Activated CD4-positive, alpha-beta memory T cell treated with anti-CD3 and anti-CD28 coated beads for 36 hours (primary cell): ENCODE measurements at regions of chr14 and their contacts with region 1.

Region 1: GRCh38 chr14:89618811-89619551 is 201.9 kb upstream of the FOXN3 start:
- DNase-seq: peak; percentile 71
- H3K4me3 Mint-ChIP-seq: peak overlapping the region; percentile 91
- H3K27ac Mint-ChIP-seq: peak overlapping the region; percentile 98
- H3K4me1 Mint-ChIP-seq: peaks cover 66% of the 10 kb centered on the region
- H3K27me3 Mint-ChIP-seq: no peaks in the 10 kb centered on the region

Region 2: GRCh38 chr14:88005978-88006851 is 1612.8 kb before region 1 on chr14:
- CTCF ChIA-PET with region 1: no interaction called
- POLR2A ChIA-PET with region 1: no interaction called
- intact Hi-C with region 1: loop called (anchors 10 kb)
- DNase-seq: peak; percentile 83
- H3K4me3 Mint-ChIP-seq: peak overlapping the region; percentile 73
- H3K27ac Mint-ChIP-seq: peak overlapping the region; percentile 87
- H3K4me1 Mint-ChIP-seq: peaks cover 59% of the 10 kb centered on the region
- H3K27me3 Mint-ChIP-seq: no peaks in the 10 kb centered on the region

Region 3: GRCh38 chr14:89178802-89179535 is 440.0 kb before region 1 on chr14:
- CTCF ChIA-PET with region 1: no interaction called
- POLR2A ChIA-PET with region 1: no interaction called
- intact Hi-C with region 1: loop called (anchors 10 kb)
- DNase-seq: no peak
- H3K4me3 Mint-ChIP-seq: no peak overlapping the region
- H3K27ac Mint-ChIP-seq: no peak overlapping the region
- H3K4me1 Mint-ChIP-seq: peaks cover 8% of the 10 kb centered on the region
- H3K27me3 Mint-ChIP-seq: no peaks in the 10 kb centered on the region

Region 4: GRCh38 chr14:89430391-89431236 is 188.4 kb before region 1 on chr14:
- CTCF ChIA-PET with region 1: no interaction called
- POLR2A ChIA-PET with region 1: interaction called, 32 read pairs
- intact Hi-C with region 1: loop called (anchors 1 kb)
- DNase-seq: peak; percentile 75
- H3K4me3 Mint-ChIP-seq: peak overlapping the region; percentile 67
- H3K27ac Mint-ChIP-seq: peak overlapping the region; percentile 88
- H3K4me1 Mint-ChIP-seq: peaks cover 69% of the 10 kb centered on the region
- H3K27me3 Mint-ChIP-seq: no peaks in the 10 kb centered on the region

Region 5: GRCh38 chr14:89572596-89573398 is 46.2 kb before region 1 on chr14:
- CTCF ChIA-PET with region 1: no interaction called
- POLR2A ChIA-PET with region 1: no interaction called
- intact Hi-C with region 1: no loop called
- DNase-seq: no peak
- H3K4me3 Mint-ChIP-seq: no peak overlapping the region
- H3K27ac Mint-ChIP-seq: no peak overlapping the region
- H3K4me1 Mint-ChIP-seq: peaks cover 28% of the 10 kb centered on the region
- H3K27me3 Mint-ChIP-seq: no peaks in the 10 kb centered on the region

Region 6: GRCh38 chr14:89701211-89702043 is 82.4 kb after region 1 on chr14:
- CTCF ChIA-PET with region 1: no interaction called
- POLR2A ChIA-PET with region 1: interaction called, 7 read pairs
- intact Hi-C with region 1: loop called (anchors 2 kb)
- DNase-seq: peak; percentile 89
- H3K4me3 Mint-ChIP-seq: peak overlapping the region; percentile 64
- H3K27ac Mint-ChIP-seq: peak overlapping the region; percentile 81
- H3K4me1 Mint-ChIP-seq: peaks cover 44% of the 10 kb centered on the region
- H3K27me3 Mint-ChIP-seq: no peaks in the 10 kb centered on the region

Region 7: DNA sequence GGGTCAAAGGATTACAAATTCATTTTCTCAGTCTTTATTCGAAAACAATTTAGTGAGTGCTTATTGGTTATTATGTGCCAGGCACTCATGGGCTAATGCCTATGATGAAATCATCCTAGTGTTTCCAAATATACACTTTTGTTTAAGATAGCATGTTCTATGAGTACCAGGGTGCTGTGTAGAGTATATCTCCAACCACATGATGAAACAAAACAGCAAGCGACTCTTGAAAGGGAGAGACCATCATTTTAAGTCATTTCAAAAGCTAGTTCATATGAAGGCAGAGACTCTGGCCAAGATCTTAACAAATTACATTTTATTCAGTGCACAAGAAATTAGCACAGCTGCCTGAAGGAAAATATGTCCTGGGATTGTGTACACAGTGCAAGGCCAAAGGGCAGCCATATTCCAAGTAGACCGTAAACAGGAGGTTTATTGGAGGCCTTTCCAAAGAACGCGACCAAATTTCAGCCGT is 131.3 kb after region 1 on chr14:
- CTCF ChIA-PET with region 1: interaction called, 3 read pairs
- POLR2A ChIA-PET with region 1: interaction called, 4 read pairs
- intact Hi-C with region 1: loop called (anchors 2 kb)
- DNase-seq: no peak
- H3K4me3 Mint-ChIP-seq: no peak overlapping the region
- H3K27ac Mint-ChIP-seq: peak overlapping the region; percentile 70
- H3K4me1 Mint-ChIP-seq: peaks cover 45% of the 10 kb centered on the region
- H3K27me3 Mint-ChIP-seq: no peaks in the 10 kb centered on the region